ENCODE measurements at regions of chr7 and their contacts with region 1.

Region 1: DNA sequence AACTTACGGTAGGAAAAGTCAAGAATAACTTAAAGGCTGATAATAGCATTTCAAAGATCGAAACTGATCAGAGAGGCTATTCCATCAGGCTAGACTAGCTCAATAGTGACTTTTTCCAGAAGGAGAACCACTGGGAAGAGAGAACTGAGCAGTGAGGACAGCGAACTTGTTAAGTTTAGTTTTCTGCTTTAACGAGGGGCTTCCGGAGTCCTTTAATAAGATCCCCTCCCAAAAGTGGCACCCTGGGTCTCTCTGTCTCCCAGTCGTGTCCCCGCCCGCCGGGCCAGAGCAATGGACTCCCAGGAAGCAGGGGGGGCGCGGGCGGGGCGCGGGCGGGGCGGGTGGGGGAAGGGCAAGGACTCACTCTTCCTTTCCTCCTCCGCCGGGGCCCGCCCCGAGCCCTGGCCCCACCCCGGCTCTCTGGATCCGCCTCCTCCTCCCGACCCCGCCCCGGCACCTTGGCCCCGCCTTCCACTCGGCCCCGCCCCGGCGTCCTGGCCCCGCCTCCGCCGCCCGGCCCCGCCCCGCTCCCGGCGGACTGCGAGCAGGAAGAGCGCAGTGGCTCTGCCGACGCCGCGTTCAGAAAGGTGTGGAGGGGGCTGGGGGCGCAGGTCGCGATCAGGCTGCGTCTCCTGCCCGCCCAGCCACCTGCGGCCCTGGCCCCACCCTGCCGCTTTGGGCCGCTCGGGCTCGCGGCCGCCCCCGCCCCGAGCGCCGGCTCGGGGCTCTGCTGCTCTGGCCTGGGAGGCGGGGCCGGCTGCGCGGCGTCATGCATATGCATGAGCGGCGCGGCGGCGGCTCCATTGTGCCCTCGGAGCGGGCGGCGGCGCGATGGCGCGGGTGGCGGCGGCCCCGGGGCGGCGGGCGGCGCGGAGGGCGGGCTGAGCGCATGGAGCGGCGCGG is at the start of gene ZMIZ2:
- DNase-seq: peak; percentile 90
- H3K4me3 ChIP-seq: peak within 1 kb of the TSS; percentile 83
- H3K27ac ChIP-seq: peak within 1 kb of the TSS; percentile 97
- H3K4me1 ChIP-seq: peaks cover 13% of the 10 kb centered on the region
- H3K27me3 ChIP-seq: no peaks in the 10 kb centered on the region
- CTCF ChIP-seq: no peak
- total RNA-seq, gene ZMIZ2: 108 and 114 TPM in 2 replicates

Region 2: GRCh38 chr7:44606450-44607254 is 141.6 kb before region 1 on chr7 and contains the start of gene OGDH:
- CTCF ChIA-PET with region 1: no interaction called
- POLR2A ChIA-PET with region 1: no interaction called
- intact Hi-C with region 1: loop called (anchors 1 kb)
- DNase-seq: peak; percentile 99
- H3K4me3 ChIP-seq: peak within 1 kb of the TSS; percentile 59
- H3K27ac ChIP-seq: peak within 1 kb of the TSS; percentile 86
- H3K4me1 ChIP-seq: peaks cover 6% of the 10 kb centered on the region
- H3K27me3 ChIP-seq: no peaks in the 10 kb centered on the region
- CTCF ChIP-seq: no peak
- total RNA-seq, gene OGDH: 111 and 113 TPM in 2 replicates

Region 3: GRCh38 chr7:44811086-44811485 is 62.8 kb after region 1 on chr7:
- CTCF ChIA-PET with region 1: no interaction called
- POLR2A ChIA-PET with region 1: interaction called, 26 read pairs
- intact Hi-C with region 1: no loop called
- DNase-seq: no peak
- H3K4me3 ChIP-seq: no peak overlapping the region
- H3K27ac ChIP-seq: no peak overlapping the region
- H3K4me1 ChIP-seq: no peaks in the 10 kb centered on the region
- H3K27me3 ChIP-seq: no peaks in the 10 kb centered on the region
- CTCF ChIP-seq: no peak

Measured in A673 (cell line).